PC-3 (cell line): ENCODE measurements at regions of chr10 and their contacts with region 1.

Region 1: DNA sequence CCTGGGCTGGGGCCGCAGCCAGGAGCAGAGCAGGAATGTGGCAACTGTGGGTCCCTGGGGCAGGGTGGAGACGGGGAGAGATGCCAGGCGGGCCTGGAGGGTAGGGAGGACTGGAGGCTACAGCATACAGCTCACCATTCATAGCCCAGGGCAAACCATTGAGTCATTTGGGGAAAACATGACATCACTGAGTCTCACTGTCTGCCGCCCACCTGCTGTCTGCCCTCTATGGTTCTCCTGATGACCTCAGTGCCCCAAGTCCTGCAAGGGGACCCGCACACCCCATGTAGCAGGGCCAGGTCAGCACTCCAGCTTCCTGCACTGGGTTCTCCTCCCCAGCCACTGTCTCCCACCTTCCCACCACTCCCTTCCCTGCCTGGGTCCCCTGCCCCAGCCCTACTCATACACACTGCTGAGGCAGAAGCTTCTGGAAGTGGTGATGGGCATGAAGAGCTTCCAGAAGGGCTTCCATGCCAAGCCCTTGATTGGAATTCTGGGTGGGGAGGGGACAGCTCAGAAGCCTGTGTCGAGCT is 10.4 kb downstream of the CHST3 start:
- DNase-seq: peak; percentile 73
- ATAC-seq: peak; percentile 11
- H3K4me3 ChIP-seq: no peak overlapping the region
- H3K27ac ChIP-seq: peak overlapping the region; percentile 89
- H3K4me1 ChIP-seq: peaks cover 76% of the 10 kb centered on the region
- H3K27me3 ChIP-seq: no peaks in the 10 kb centered on the region
- CTCF ChIP-seq: no peak

Region 2: DNA sequence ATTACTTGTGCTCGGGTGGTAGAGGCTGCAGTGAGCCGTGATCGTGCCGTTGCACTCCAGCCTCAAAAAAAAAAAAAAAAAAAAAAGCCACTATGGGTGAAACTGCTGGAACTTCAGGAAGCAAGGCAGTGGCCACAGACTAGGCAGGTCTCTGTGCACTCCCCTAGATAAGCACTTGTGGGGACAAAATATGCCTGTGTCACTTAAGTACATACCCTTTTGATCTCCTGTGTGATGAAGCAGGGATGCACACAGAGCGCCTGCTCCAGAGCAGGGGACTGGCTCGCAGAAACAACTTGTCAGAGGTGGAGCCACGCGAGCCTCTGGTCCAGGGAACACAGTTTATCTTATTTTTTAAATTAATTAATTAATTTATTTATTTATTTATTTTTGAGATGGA is 80.6 kb before region 1 on chr10:
- CTCF ChIA-PET with region 1: interaction called, 3 read pairs
- POLR2A ChIA-PET with region 1: no interaction called
- intact Hi-C with region 1: loop called (anchors 1 kb)
- DNase-seq: no peak
- ATAC-seq: no peak
- H3K4me3 ChIP-seq: no peak overlapping the region
- H3K27ac ChIP-seq: no peak overlapping the region
- H3K4me1 ChIP-seq: peaks cover 5% of the 10 kb centered on the region
- H3K27me3 ChIP-seq: no peaks in the 10 kb centered on the region
- CTCF ChIP-seq: no peak

Region 3: GRCh38 chr10:72001033-72001395 is 26.5 kb after region 1 on chr10:
- CTCF ChIA-PET with region 1: no interaction called
- POLR2A ChIA-PET with region 1: no interaction called
- intact Hi-C with region 1: no loop called
- DNase-seq: no peak
- ATAC-seq: no peak
- H3K4me3 ChIP-seq: no peak overlapping the region
- H3K27ac ChIP-seq: no peak overlapping the region
- H3K4me1 ChIP-seq: peaks cover 20% of the 10 kb centered on the region
- H3K27me3 ChIP-seq: no peaks in the 10 kb centered on the region
- CTCF ChIP-seq: no peak

Region 4: GRCh38 chr10:72026278-72027111 is 51.9 kb after region 1 on chr10:
- CTCF ChIA-PET with region 1: interaction called, 3 read pairs
- POLR2A ChIA-PET with region 1: no interaction called
- intact Hi-C with region 1: loop called (anchors 5 kb)
- DNase-seq: peak; percentile 57
- ATAC-seq: peak; percentile 56
- H3K4me3 ChIP-seq: no peak overlapping the region
- H3K27ac ChIP-seq: peak overlapping the region; percentile 91; the same call in 1 of the 2 replicates
- H3K4me1 ChIP-seq: peaks cover 22% of the 10 kb centered on the region
- H3K27me3 ChIP-seq: no peaks in the 10 kb centered on the region
- CTCF ChIP-seq: no peak